ENCODE measurements at regions of chr2 and their contacts with region 1.

Region 1: GRCh38 chr2:130181325-130181879 is at the start of gene SMPD4:
- DNase-seq: peak; percentile 98
- H3K4me3 ChIP-seq: peak within 1 kb of the TSS; percentile 93
- H3K27ac ChIP-seq: peak within 1 kb of the TSS; percentile 94
- H3K4me1 ChIP-seq: no peaks in the 10 kb centered on the region
- H3K27me3 ChIP-seq: no peaks in the 10 kb centered on the region
- CTCF ChIP-seq: no peak
- total RNA-seq, gene SMPD4: 105 and 108 TPM in 2 replicates

Region 2: GRCh38 chr2:129605646-129606045 is 575.8 kb before region 1 on chr2:
- CTCF ChIA-PET with region 1: no interaction called
- POLR2A ChIA-PET with region 1: no interaction called
- intact Hi-C with region 1: no loop called
- DNase-seq: peak; percentile 87
- H3K4me3 ChIP-seq: peak overlapping the region; percentile 24
- H3K27ac ChIP-seq: peak overlapping the region; percentile 96
- H3K4me1 ChIP-seq: peaks cover 34% of the 10 kb centered on the region
- H3K27me3 ChIP-seq: no peaks in the 10 kb centered on the region
- CTCF ChIP-seq: no peak

Region 3: GRCh38 chr2:130158631-130159030 is 22.8 kb before region 1 on chr2:
- CTCF ChIA-PET with region 1: no interaction called
- POLR2A ChIA-PET with region 1: no interaction called
- intact Hi-C with region 1: loop called (anchors 2 kb)
- DNase-seq: no peak
- H3K4me3 ChIP-seq: no peak overlapping the region
- H3K27ac ChIP-seq: no peak overlapping the region
- H3K4me1 ChIP-seq: no peaks in the 10 kb centered on the region
- H3K27me3 ChIP-seq: no peaks in the 10 kb centered on the region
- CTCF ChIP-seq: no peak

Region 4: GRCh38 chr2:130332271-130333073 is 151.1 kb after region 1 on chr2:
- CTCF ChIA-PET with region 1: interaction called, 4 read pairs
- POLR2A ChIA-PET with region 1: no interaction called
- intact Hi-C with region 1: loop called (anchors 1 kb)
- DNase-seq: peak; percentile 83
- H3K4me3 ChIP-seq: peak overlapping the region; percentile 35
- H3K27ac ChIP-seq: no peak overlapping the region
- H3K4me1 ChIP-seq: no peaks in the 10 kb centered on the region
- H3K27me3 ChIP-seq: peaks cover 42% of the 10 kb centered on the region
- CTCF ChIP-seq: peak; percentile 95

Region 5: DNA sequence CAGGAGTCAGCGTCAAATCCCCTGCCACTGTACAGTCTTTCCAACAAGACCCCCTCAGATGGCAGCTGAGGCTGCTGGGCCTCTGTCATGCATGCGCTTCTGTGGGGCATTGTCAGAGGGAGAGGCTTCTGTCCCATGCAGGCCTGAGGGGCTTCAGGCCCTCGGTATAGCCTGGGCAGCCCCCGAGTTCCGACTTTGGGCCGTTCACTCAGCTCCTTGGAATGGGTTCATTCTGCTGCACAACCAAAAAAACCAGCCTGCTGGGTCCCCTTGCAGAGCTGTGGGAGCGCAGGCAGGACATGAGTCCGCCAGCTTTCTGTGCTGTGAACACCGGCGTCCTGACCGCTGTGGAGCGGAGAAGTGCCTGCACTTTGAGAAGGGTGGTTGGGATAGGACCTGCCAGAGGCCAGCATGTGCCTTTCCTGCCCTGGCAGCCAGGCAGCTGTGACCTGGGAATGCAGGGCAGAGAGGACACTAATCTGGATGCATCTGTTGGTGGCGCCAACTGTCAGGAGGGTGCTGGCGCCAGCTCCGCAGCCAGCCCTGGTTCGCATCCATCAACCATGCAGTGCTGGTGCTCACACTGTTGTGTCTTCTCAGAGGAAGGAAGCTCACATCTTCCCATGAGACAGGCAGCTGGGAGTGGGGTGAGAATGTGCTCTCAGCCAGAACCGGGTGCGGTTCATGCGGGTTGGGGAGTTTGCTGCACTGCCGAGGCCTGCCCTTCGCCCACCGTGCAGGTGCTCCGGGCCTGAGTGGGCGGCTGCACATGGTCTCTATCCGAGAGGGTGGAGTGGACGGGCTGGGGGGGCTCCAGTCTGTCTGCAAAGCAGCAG is 669.6 kb after region 1 on chr2:
- CTCF ChIA-PET with region 1: no interaction called
- POLR2A ChIA-PET with region 1: no interaction called
- intact Hi-C with region 1: no loop called
- DNase-seq: no peak
- H3K4me3 ChIP-seq: no peak overlapping the region
- H3K27ac ChIP-seq: no peak overlapping the region
- H3K4me1 ChIP-seq: no peaks in the 10 kb centered on the region
- H3K27me3 ChIP-seq: no peaks in the 10 kb centered on the region
- CTCF ChIP-seq: no peak

Measured in A673 (cell line).